Activated B cell treated with CpG ODN at 0.5 μM for 24 hours (primary cell): ENCODE measurements at regions of chr5 and their contacts with region 1.

Region 1: GRCh38 chr5:78779771-78780616 is 131.4 kb upstream of the LHFPL2 start:
- DNase-seq: no peak
- ATAC-seq: no peak
- H3K4me3 Mint-ChIP-seq: no peak overlapping the region
- H3K27ac Mint-ChIP-seq: no peak overlapping the region
- H3K4me1 Mint-ChIP-seq: peaks cover 12% of the 10 kb centered on the region
- H3K27me3 Mint-ChIP-seq: no peaks in the 10 kb centered on the region
- CTCF ChIP-seq: no peak

Region 2: GRCh38 chr5:78746021-78746770 is 33.8 kb before region 1 on chr5:
- CTCF ChIA-PET with region 1: no interaction called
- POLR2A ChIA-PET with region 1: interaction called, 10 read pairs
- intact Hi-C with region 1: no loop called
- DNase-seq: no peak
- ATAC-seq: no peak
- H3K4me3 Mint-ChIP-seq: no peak overlapping the region
- H3K27ac Mint-ChIP-seq: no peak overlapping the region
- H3K4me1 Mint-ChIP-seq: no peaks in the 10 kb centered on the region
- H3K27me3 Mint-ChIP-seq: no peaks in the 10 kb centered on the region
- CTCF ChIP-seq: no peak

Region 3: GRCh38 chr5:78809444-78809843 is 29.4 kb after region 1 on chr5:
- CTCF ChIA-PET with region 1: no interaction called
- POLR2A ChIA-PET with region 1: no interaction called
- intact Hi-C with region 1: no loop called
- DNase-seq: no peak
- ATAC-seq: no peak
- H3K4me3 Mint-ChIP-seq: no peak overlapping the region
- H3K27ac Mint-ChIP-seq: no peak overlapping the region
- H3K4me1 Mint-ChIP-seq: peaks cover 9% of the 10 kb centered on the region
- H3K27me3 Mint-ChIP-seq: no peaks in the 10 kb centered on the region
- CTCF ChIP-seq: no peak

Region 4: DNA sequence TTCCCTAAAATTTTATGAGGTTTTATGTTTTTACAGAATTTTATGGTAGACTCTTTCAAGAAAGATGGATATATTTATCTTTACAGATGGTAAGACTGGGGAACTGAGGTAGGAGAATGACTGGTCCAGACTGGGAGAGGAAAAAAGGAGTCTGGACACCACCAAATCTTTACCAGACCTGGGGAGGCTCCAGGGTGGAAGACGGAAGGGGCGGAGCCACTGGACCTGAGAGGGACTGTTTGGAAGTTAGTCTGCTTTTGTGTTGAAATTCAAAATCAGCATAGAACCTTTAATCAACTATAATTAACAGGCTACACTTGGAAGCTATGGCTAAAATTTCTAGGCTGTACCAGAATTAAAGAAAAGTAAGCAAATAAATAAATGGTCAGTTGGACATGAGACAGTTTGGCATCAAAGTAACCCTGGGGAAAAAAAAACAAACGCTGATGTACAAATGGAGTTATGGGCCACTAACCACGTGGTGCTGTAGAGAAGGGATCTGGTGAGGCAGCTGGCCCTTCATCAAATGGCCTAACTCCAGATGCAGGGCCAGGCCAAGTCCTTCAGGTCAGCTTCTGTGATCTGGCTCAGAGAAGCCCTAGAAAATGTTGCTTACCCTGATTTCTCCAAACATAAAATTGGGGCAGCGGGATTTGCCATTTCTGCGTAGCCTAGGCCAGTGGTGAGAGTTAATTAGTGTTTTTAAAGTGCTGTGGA is 50.0 kb after region 1 on chr5:
- CTCF ChIA-PET with region 1: no interaction called
- POLR2A ChIA-PET with region 1: no interaction called
- intact Hi-C with region 1: no loop called
- DNase-seq: no peak
- ATAC-seq: no peak
- H3K4me3 Mint-ChIP-seq: no peak overlapping the region
- H3K27ac Mint-ChIP-seq: no peak overlapping the region
- H3K4me1 Mint-ChIP-seq: peaks cover 37% of the 10 kb centered on the region
- H3K27me3 Mint-ChIP-seq: no peaks in the 10 kb centered on the region
- CTCF ChIP-seq: no peak

Region 5: GRCh38 chr5:78984439-78985115 is 204.6 kb after region 1 on chr5:
- CTCF ChIA-PET with region 1: no interaction called
- POLR2A ChIA-PET with region 1: no interaction called
- intact Hi-C with region 1: no loop called
- DNase-seq: peak; percentile 83
- ATAC-seq: peak; percentile 55
- H3K4me3 Mint-ChIP-seq: peak overlapping the region; percentile 90
- H3K27ac Mint-ChIP-seq: peak overlapping the region; percentile 91
- H3K4me1 Mint-ChIP-seq: peaks cover 46% of the 10 kb centered on the region
- H3K27me3 Mint-ChIP-seq: no peaks in the 10 kb centered on the region
- CTCF ChIP-seq: no peak

Region 6: DNA sequence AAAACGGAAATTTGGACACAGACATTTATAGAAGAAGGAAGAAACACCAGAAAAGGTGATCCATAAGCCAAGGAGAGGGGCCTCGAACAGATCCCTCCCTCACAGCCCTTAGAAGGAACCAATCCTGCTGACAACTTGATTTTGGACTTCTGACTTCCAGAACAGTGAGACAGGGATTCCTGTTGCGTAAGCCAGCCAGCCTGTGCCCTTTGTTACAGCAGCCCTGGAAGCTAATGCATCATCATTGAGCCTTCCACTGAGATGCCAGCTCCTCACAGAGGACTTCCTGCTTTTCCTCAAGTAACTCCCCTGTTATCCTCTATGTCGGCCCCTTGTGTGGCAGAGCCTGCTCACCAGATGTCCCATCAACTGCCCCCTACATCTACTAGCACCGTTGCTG is 550.1 kb after region 1 on chr5:
- CTCF ChIA-PET with region 1: no interaction called
- POLR2A ChIA-PET with region 1: no interaction called
- intact Hi-C with region 1: no loop called
- DNase-seq: no peak
- ATAC-seq: no peak
- H3K4me3 Mint-ChIP-seq: no peak overlapping the region
- H3K27ac Mint-ChIP-seq: no peak overlapping the region
- H3K4me1 Mint-ChIP-seq: no peaks in the 10 kb centered on the region
- H3K27me3 Mint-ChIP-seq: no peaks in the 10 kb centered on the region
- CTCF ChIP-seq: no peak